ENCODE measurements at regions of chrX and their contacts with region 1.

Region 1: GRCh38 chrX:12946838-12947544 is 27.9 kb upstream of the TMSB4X start:
- DNase-seq: peak in 8 of 9 donors; percentile 67 to 89 (median 74)
- ATAC-seq: peak; percentile 64
- H3K4me3 ChIP-seq: peak overlapping the region; percentile 30
- H3K4me3 Mint-ChIP-seq: peak overlapping the region; percentile 16 to 84 (median 72)
- H3K27ac ChIP-seq: peak overlapping the region; percentile 80
- H3K27ac Mint-ChIP-seq: peak overlapping the region; percentile 91 to 98 (median 96)
- H3K4me1 ChIP-seq: peaks cover 39 to 41% of the 10 kb centered on the region in 2 donors
- H3K4me1 Mint-ChIP-seq: peaks cover 8 to 60% (median 53%) of the 10 kb centered on the region in 7 donors
- H3K27me3 ChIP-seq: no peaks in the 10 kb centered on the region
- H3K27me3 Mint-ChIP-seq: no peaks in the 10 kb centered on the region

Region 2: GRCh38 chrX:12894074-12895030 is 52.6 kb before region 1 on chrX:
- CTCF ChIA-PET with region 1: no interaction called
- POLR2A ChIA-PET with region 1: no interaction called
- intact Hi-C with region 1: loop called in 1 of 2 experiments (anchors 5 kb)
- DNase-seq: peak; percentile 10 to 56 (median 35)
- ATAC-seq: peak; percentile 67
- H3K4me3 ChIP-seq: no peak overlapping the region
- H3K4me3 Mint-ChIP-seq: peak overlapping the region in 2 of 10 donors; percentile 44 to 51
- H3K27ac ChIP-seq: no peak overlapping the region
- H3K27ac Mint-ChIP-seq: peak overlapping the region in 5 of 9 donors; percentile 5 to 82 (median 77)
- H3K4me1 ChIP-seq: peaks cover 0 to 13% of the 10 kb centered on the region in 2 donors
- H3K4me1 Mint-ChIP-seq: peaks cover 4 to 56% (median 20%) of the 10 kb centered on the region in 7 donors
- H3K27me3 ChIP-seq: no peaks in the 10 kb centered on the region
- H3K27me3 Mint-ChIP-seq: no peaks in the 10 kb centered on the region

Region 3: GRCh38 chrX:12974796-12975669 is 28.0 kb after region 1 on chrX and contains the start of gene TMSB4X:
- CTCF ChIA-PET with region 1: interaction called, 102 read pairs
- POLR2A ChIA-PET with region 1: interaction called, 1,267 read pairs
- intact Hi-C with region 1: loop called (anchors 1 kb)
- DNase-seq: peak; percentile 69 to 87 (median 81)
- ATAC-seq: peak; percentile 75
- H3K4me3 ChIP-seq: peak within 1 kb of the TSS; percentile 97
- H3K4me3 Mint-ChIP-seq: peak within 1 kb of the TSS; percentile 92 to 99 (median 96)
- H3K27ac ChIP-seq: peak within 1 kb of the TSS; percentile 93
- H3K27ac Mint-ChIP-seq: peak within 1 kb of the TSS; percentile 92 to 99 (median 97)
- H3K4me1 ChIP-seq: peaks cover 5 to 19% of the 10 kb centered on the region in 2 donors
- H3K4me1 Mint-ChIP-seq: peaks cover 6 to 57% (median 24%) of the 10 kb centered on the region in 7 donors
- H3K27me3 ChIP-seq: no peaks in the 10 kb centered on the region
- H3K27me3 Mint-ChIP-seq: peaks cover 0 to 8% (median 0%) of the 10 kb centered on the region in 5 donors
- total RNA-seq, gene TMSB4X: 3,911 to 13,454 (median 4,935) TPM

Region 4: GRCh38 chrX:13029341-13029740 is 82.3 kb after region 1 on chrX:
- CTCF ChIA-PET with region 1: interaction called, 4 read pairs
- POLR2A ChIA-PET with region 1: interaction called, 10 read pairs
- intact Hi-C with region 1: loop called in 1 of 2 experiments (anchors 2 kb)
- DNase-seq: peak in 2 of 9 donors; percentile 13 to 23
- ATAC-seq: peak; percentile 44
- H3K4me3 ChIP-seq: no peak overlapping the region
- H3K4me3 Mint-ChIP-seq: peak overlapping the region; percentile 20 to 78 (median 62)
- H3K27ac ChIP-seq: peak overlapping the region; percentile 71
- H3K27ac Mint-ChIP-seq: peak overlapping the region; percentile 81 to 98 (median 93)
- H3K4me1 ChIP-seq: peaks cover 51 to 52% of the 10 kb centered on the region in 2 donors
- H3K4me1 Mint-ChIP-seq: peaks cover 33 to 88% (median 72%) of the 10 kb centered on the region in 7 donors
- H3K27me3 ChIP-seq: no peaks in the 10 kb centered on the region
- H3K27me3 Mint-ChIP-seq: no peaks in the 10 kb centered on the region

Region 5: DNA sequence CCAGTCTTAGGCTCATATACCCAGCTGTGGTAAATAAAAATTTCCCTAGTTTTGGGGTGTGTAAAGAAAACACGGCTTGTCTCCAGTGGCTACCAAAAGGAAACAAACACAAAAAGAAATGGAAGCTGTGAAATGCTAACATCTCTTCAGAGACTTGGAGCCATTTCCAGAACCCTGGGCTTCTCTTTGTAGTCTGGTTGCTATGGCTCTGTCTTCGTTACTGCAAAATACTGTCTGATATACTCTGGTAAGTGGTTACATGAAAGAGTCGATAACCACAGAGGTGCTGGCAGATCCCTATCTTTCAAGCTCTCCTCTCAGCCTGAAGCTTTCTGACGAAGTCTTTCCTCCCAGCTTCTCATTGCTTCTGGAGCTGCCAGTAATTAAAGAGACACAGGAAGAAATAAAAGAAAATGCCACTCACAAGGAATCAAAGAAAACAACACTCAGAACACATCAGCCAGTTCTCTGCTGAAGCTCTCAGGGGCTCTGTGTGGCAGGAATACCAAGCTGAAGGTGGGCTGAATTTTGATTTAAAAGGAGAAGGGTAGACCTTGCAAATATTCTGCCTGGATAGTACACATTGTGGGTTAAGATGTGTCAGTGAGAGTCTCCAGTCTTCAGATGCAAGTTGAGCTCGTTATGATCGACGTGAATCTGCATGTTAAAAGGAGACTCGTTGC is 205.0 kb after region 1 on chrX:
- CTCF ChIA-PET with region 1: interaction called, 7 read pairs
- POLR2A ChIA-PET with region 1: no interaction called
- intact Hi-C with region 1: loop called (anchors 2 to 5 kb)
- DNase-seq: peak in 7 of 9 donors; percentile 51 to 82 (median 80)
- ATAC-seq: peak; percentile 96
- H3K4me3 ChIP-seq: no peak overlapping the region
- H3K4me3 Mint-ChIP-seq: peak overlapping the region; percentile 46 to 77 (median 68)
- H3K27ac ChIP-seq: peak overlapping the region; percentile 55
- H3K27ac Mint-ChIP-seq: peak overlapping the region; percentile 78 to 94 (median 85)
- H3K4me1 ChIP-seq: peaks cover 7 to 8% of the 10 kb centered on the region in 2 donors
- H3K4me1 Mint-ChIP-seq: peaks cover 0 to 31% (median 18%) of the 10 kb centered on the region in 7 donors
- H3K27me3 ChIP-seq: no peaks in the 10 kb centered on the region
- H3K27me3 Mint-ChIP-seq: no peaks in the 10 kb centered on the region

Region 6: GRCh38 chrX:13341491-13342101 is 394.6 kb after region 1 on chrX:
- CTCF ChIA-PET with region 1: no interaction called
- POLR2A ChIA-PET with region 1: no interaction called
- intact Hi-C with region 1: loop called in 1 of 2 experiments (anchors 5 kb)
- DNase-seq: peak in 1 of 9 donors; percentile 8
- ATAC-seq: no peak
- H3K4me3 ChIP-seq: no peak overlapping the region
- H3K4me3 Mint-ChIP-seq: no peak overlapping the region
- H3K27ac ChIP-seq: no peak overlapping the region
- H3K27ac Mint-ChIP-seq: no peak overlapping the region
- H3K4me1 ChIP-seq: no peaks in the 10 kb centered on the region
- H3K4me1 Mint-ChIP-seq: no peaks in the 10 kb centered on the region
- H3K27me3 ChIP-seq: no peaks in the 10 kb centered on the region
- H3K27me3 Mint-ChIP-seq: no peaks in the 10 kb centered on the region

Region 7: GRCh38 chrX:13653022-13653693 is 706.2 kb after region 1 on chrX and contains the start of gene TCEANC:
- CTCF ChIA-PET with region 1: no interaction called
- POLR2A ChIA-PET with region 1: no interaction called
- intact Hi-C with region 1: loop called in 1 of 2 experiments (anchors 5 kb)
- DNase-seq: peak; percentile 77 to 96 (median 93)
- ATAC-seq: peak; percentile 97
- H3K4me3 ChIP-seq: peak within 1 kb of the TSS; percentile 93
- H3K4me3 Mint-ChIP-seq: peak within 1 kb of the TSS; percentile 79 to 96 (median 93)
- H3K27ac ChIP-seq: peak within 1 kb of the TSS; percentile 93
- H3K27ac Mint-ChIP-seq: peak within 1 kb of the TSS; percentile 91 to 98 (median 96)
- H3K4me1 ChIP-seq: peaks cover 15 to 16% of the 10 kb centered on the region in 2 donors
- H3K4me1 Mint-ChIP-seq: peaks cover 0 to 39% (median 24%) of the 10 kb centered on the region in 7 donors
- H3K27me3 ChIP-seq: no peaks in the 10 kb centered on the region
- H3K27me3 Mint-ChIP-seq: no peaks in the 10 kb centered on the region
- total RNA-seq, gene TCEANC: 5.0 to 17.5 (median 11.4) TPM